ENCODE measurements at regions of chr19 and their contacts with region 1.

Region 1: DNA sequence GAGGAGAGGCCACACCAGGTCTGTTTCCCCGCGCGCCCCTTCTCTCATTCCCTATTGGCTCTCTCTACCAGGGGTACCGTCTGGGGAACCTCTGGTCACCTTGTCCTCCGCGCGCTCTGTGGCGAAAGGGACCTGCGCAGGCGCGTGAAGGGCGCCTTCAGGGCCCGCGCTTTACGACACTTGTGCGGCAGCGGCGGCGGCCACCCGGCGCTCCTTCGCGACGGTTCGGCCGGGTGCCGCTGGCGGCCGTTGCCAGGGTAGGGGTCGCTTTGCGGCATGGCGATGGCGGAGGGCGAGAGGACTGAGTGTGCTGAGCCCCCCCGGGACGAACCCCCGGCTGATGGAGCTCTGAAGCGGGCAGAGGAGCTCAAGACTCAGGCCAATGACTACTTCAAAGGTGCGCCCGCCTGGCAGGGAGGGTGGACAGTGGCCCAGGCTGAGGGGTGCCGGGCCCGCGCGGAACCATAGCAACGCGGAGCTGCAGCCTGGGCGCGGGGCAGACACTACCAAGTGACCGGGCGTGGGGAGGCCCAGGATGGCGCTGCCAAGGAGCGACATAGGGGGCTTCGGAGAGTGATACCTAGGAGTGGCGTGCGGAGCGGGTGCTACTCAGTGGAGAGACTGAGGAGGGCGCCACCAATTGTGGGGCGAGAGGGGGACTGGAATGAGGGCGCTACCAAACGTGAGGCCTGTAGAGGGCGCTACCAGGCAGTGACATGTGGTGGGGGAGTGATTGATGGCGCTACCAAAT is at the start of gene PPP5C:
- DNase-seq: peak; percentile 98 to 100
- ATAC-seq: peak; percentile 88 to 92
- H3K4me3 ChIP-seq: peak within 1 kb of the TSS; percentile 71
- H3K27ac ChIP-seq: peak within 1 kb of the TSS; percentile 92 to 97
- H3K4me1 ChIP-seq: peaks cover 44% of the 10 kb centered on the region
- CTCF ChIP-seq: peak; percentile 96
- EP300 ChIP-seq: no peak
- POLR2A ChIP-seq: peak; percentile 80
- RAD21 ChIP-seq: peak; percentile 53 to 69
- polyA plus RNA-seq, gene PPP5C: 107 and 126 TPM in 2 replicates

Region 2: DNA sequence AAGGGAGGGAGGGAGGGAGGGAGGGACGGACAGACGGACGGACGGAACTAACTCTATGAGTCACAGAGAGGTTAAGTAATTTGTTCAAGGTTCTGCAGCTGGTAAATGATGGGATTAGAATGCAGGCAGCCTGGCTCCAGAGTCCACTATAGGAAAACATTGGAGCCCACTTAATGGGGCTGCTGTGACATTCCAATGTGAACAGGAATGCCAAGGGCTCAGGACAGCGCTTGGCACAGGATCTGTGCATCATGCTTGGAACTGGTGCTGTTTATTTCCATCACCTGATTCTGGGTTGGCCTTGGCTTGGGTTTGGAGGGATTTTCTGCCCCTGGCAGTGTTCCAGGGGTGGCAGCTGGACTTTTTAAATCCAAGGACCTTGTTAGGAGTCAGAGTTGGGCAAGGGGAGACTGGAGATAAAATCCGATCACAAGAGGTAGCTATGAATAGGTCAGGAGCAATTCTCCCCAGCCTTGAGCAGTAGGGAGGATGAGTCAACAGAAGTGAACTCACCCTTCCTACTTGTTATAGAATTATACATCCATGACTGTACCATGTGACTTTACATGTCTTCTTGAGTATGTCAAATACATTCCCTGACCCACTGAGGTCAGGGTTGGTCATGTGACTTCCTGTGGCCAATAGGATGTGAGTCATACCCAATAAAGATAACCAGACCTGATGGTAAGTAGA is 58.0 kb before region 1 on chr19:
- CTCF ChIA-PET with region 1: interaction called, 129 read pairs
- POLR2A ChIA-PET with region 1: no interaction called
- DNase-seq: peak; percentile 73 to 74
- ATAC-seq: peak; percentile 87 to 88
- H3K4me3 ChIP-seq: no peak overlapping the region
- H3K27ac ChIP-seq: peak overlapping the region; percentile 61 to 68
- H3K4me1 ChIP-seq: peaks cover 11% of the 10 kb centered on the region
- CTCF ChIP-seq: no peak
- EP300 ChIP-seq: no peak
- POLR2A ChIP-seq: no peak
- RAD21 ChIP-seq: no peak

Region 3: DNA sequence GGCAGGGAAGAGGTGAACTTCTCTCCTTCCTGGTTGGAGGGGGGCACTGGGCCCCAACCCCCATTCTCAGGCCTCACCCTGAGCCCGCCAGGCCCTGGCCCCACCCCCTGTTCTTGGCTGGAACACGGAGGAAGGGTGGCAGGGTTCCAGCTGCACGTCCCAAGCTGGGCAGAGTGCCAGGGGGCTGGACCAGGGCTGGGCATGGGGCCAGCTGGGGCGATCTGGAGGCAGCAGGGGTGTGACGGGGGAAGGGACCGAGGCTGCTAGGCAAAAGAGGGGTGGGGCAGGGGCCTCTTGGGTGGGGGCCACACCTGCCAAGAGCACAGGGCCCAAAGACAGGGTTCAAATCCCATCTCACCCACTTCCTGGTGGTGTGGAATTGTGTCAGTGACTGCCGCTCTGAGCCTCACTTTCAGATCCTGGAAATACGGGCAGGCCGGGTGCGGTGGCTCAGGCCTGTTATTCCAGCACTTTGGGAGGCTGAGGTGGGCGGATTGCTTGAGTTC is 47.9 kb before region 1 on chr19:
- CTCF ChIA-PET with region 1: interaction called, 14 read pairs
- POLR2A ChIA-PET with region 1: no interaction called
- DNase-seq: peak; percentile 90 to 95
- ATAC-seq: peak; percentile 60 to 73
- H3K4me3 ChIP-seq: 0 out of 3 replicates have a peak overlapping the region, but pooled peaks have one; percentile 15
- H3K27ac ChIP-seq: peak overlapping the region; percentile 67 to 76
- H3K4me1 ChIP-seq: peaks cover 34% of the 10 kb centered on the region
- CTCF ChIP-seq: no peak
- EP300 ChIP-seq: no peak
- POLR2A ChIP-seq: no peak
- RAD21 ChIP-seq: no peak

Region 4: GRCh38 chr19:46319613-46320012 is 27.4 kb before region 1 on chr19:
- CTCF ChIA-PET with region 1: interaction called, 26 read pairs
- POLR2A ChIA-PET with region 1: no interaction called
- DNase-seq: no peak
- ATAC-seq: no peak
- H3K4me3 ChIP-seq: no peak overlapping the region
- H3K27ac ChIP-seq: no peak overlapping the region
- H3K4me1 ChIP-seq: no peaks in the 10 kb centered on the region
- CTCF ChIP-seq: no peak
- EP300 ChIP-seq: no peak
- POLR2A ChIP-seq: no peak
- RAD21 ChIP-seq: no peak

Region 5: GRCh38 chr19:46368116-46368515 is 21.1 kb after region 1 on chr19:
- CTCF ChIA-PET with region 1: interaction called, 31 read pairs
- POLR2A ChIA-PET with region 1: interaction called, 4 read pairs
- DNase-seq: no peak
- ATAC-seq: no peak
- H3K4me3 ChIP-seq: no peak overlapping the region
- H3K27ac ChIP-seq: no peak overlapping the region
- H3K4me1 ChIP-seq: peaks cover 22% of the 10 kb centered on the region
- CTCF ChIP-seq: no peak
- EP300 ChIP-seq: no peak
- POLR2A ChIP-seq: no peak
- RAD21 ChIP-seq: no peak

Region 6: GRCh38 chr19:46373421-46374359 is 26.7 kb after region 1 on chr19:
- CTCF ChIA-PET with region 1: interaction called, 31 read pairs
- POLR2A ChIA-PET with region 1: interaction called, 4 read pairs
- DNase-seq: peak; percentile 88 to 93
- ATAC-seq: peak; percentile 80 to 87
- H3K4me3 ChIP-seq: peak overlapping the region; percentile 21; the same call in 2 of the 3 replicates
- H3K27ac ChIP-seq: peak overlapping the region; percentile 90 to 94
- H3K4me1 ChIP-seq: peaks cover 49% of the 10 kb centered on the region
- CTCF ChIP-seq: peak; percentile 19; the same call in 1 of the 3 replicates
- EP300 ChIP-seq: peak in 1 of 2 experiments; percentile 6; a peak in 1 of 5 replicates
- POLR2A ChIP-seq: peak; percentile 21
- RAD21 ChIP-seq: no peak; a peak in 1 of 5 replicates

Region 7: GRCh38 chr19:46384396-46384795 is 37.4 kb after region 1 on chr19:
- CTCF ChIA-PET with region 1: interaction called, 12 read pairs
- POLR2A ChIA-PET with region 1: no interaction called
- DNase-seq: no peak
- ATAC-seq: no peak
- H3K4me3 ChIP-seq: no peak overlapping the region
- H3K27ac ChIP-seq: no peak overlapping the region
- H3K4me1 ChIP-seq: no peaks in the 10 kb centered on the region
- CTCF ChIP-seq: no peak
- EP300 ChIP-seq: no peak
- POLR2A ChIP-seq: no peak
- RAD21 ChIP-seq: no peak

Region 8: DNA sequence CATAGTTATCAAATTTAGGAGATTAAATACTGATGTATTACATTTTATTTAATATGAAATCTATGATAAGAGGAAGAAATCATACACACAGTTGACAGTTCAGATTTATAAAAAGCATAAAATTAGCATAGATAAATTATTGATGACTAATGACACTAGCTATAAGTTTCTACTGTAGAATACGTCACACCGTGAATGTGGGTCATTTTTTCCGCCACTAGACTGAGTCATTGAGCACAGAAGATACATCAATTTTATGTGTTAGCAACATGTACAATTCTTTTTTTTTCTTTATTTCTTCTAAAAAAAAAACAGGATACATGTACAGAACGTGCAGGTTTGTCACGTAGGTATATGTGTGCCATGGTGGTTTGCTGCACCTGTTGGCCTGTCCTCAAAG is 481.5 kb after region 1 on chr19:
- CTCF ChIA-PET with region 1: no interaction called
- POLR2A ChIA-PET with region 1: no interaction called
- DNase-seq: no peak
- ATAC-seq: no peak
- H3K4me3 ChIP-seq: no peak overlapping the region
- H3K27ac ChIP-seq: no peak overlapping the region
- H3K4me1 ChIP-seq: peaks cover 10% of the 10 kb centered on the region
- CTCF ChIP-seq: no peak
- EP300 ChIP-seq: no peak
- POLR2A ChIP-seq: no peak
- RAD21 ChIP-seq: no peak